Colonic mucosa (tissue), 4 donors: ENCODE measurements at regions of chr3 and their contacts with region 1.

Region 1: GRCh38 chr3:141575879-141576743 is 89.3 kb downstream of the RASA2 start:
- DNase-seq: no peak
- H3K4me3 ChIP-seq: no peak overlapping the region
- H3K27ac ChIP-seq: no peak overlapping the region
- H3K4me1 ChIP-seq: no peaks in the 10 kb centered on the region
- H3K27me3 ChIP-seq: no peaks in the 10 kb centered on the region
- CTCF ChIP-seq: peak; percentile 45

Region 2: DNA sequence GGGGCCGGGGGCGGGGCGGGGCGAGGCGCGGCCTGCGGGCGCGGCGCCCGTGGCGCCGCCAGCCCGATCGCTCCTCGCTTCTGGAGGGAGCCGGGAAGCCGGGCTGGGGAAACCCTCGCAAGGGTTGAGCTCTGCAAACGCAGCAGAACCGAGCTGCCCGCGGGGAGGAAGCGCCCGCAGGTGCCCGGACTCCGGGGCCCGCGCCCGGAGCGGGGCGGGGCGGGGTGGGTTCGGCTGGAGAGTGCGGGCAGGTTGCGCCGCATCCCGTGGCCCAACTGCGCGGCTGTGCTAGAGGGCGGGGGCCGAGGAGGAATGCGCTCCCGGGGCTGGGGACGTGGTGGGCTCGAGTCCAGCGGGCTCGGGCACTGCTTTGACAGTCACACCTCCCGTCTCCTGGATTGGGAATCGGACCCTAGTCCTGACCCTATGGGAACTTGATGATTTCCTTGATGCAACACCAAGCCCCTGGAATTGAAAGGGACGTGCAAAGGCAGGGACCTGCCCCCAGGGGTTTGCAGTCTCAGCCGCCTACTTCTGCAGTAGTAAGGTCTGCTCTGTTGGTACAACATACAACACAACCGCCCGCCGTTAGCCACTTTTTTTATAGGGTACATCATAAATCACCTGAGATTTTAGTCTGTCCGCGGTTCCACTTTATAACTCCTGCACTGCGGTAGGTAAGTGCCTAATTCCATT is 173.5 kb before region 1 on chr3:
- intact Hi-C with region 1: no loop called
- DNase-seq: peak; percentile 70
- H3K4me3 ChIP-seq: peak overlapping the region; percentile 75
- H3K27ac ChIP-seq: peak overlapping the region; percentile 95
- H3K4me1 ChIP-seq: peaks cover 9% of the 10 kb centered on the region
- H3K27me3 ChIP-seq: no peaks in the 10 kb centered on the region
- CTCF ChIP-seq: no peak

Region 3: GRCh38 chr3:141644931-141645330 is 68.8 kb after region 1 on chr3:
- intact Hi-C with region 1: loop called (anchors 10 kb)
- DNase-seq: peak; percentile 88
- H3K4me3 ChIP-seq: no peak overlapping the region
- H3K27ac ChIP-seq: no peak overlapping the region
- H3K4me1 ChIP-seq: no peaks in the 10 kb centered on the region
- H3K27me3 ChIP-seq: no peaks in the 10 kb centered on the region
- CTCF ChIP-seq: peak; percentile 81

Region 4: GRCh38 chr3:141905129-141905528 is 329.0 kb after region 1 on chr3:
- intact Hi-C with region 1: loop called (anchors 10 kb)
- DNase-seq: no peak
- H3K4me3 ChIP-seq: no peak overlapping the region
- H3K27ac ChIP-seq: no peak overlapping the region
- H3K4me1 ChIP-seq: no peaks in the 10 kb centered on the region
- H3K27me3 ChIP-seq: no peaks in the 10 kb centered on the region
- CTCF ChIP-seq: no peak